Transverse colon (tissue), 4 donors: ENCODE measurements at regions of chr1 and their contacts with region 1.

Region 1: GRCh38 chr1:246513619-246514343 is 6.7 kb upstream of the SMYD3 start:
- DNase-seq: no peak
- H3K4me3 ChIP-seq: no peak overlapping the region
- H3K27ac ChIP-seq: no peak overlapping the region
- H3K4me1 ChIP-seq: no peaks in the 10 kb centered on the region
- H3K27me3 ChIP-seq: no peaks in the 10 kb centered on the region
- CTCF ChIP-seq: no peak
- EP300 ChIP-seq: no peak
- POLR2A ChIP-seq: no peak

Region 2: DNA sequence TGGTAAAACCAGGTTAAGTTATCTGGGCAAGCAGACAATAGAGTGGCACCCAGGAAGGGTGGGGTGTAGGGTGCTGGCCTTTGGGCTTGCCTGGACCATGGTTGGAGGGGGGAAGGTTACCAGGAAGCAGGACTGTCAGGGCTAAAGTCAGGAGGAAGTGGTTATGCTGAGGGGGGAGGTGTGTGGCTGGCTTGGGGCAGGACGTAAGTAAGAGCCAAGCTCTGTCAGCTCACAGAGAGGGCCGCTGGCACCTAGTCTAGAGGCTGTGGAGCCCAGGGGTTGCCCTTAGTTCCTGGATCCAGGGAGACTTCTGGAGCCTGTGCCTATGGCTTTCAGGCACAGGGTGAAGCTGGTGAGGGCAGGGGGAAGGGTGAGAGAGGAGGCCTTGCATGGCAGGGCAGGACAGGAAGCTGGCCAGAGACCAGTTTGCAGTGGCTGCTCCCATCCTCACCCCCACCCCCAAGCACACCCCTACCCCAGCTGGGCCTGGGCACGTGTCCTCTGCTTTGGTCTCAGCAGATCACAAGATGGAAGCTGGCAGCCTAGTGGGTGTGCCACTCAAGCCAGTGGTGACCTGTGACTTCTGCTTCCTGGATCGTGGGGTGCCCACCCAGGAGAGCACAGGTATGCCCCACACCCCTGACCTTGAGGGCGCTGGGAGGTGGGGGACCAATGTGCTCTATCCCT is 13.8 kb after region 1 on chr1:
- in situ Hi-C with region 1: no loop called
- intact Hi-C with region 1: loop called (anchors 2 kb)
- DNase-seq: no peak
- H3K4me3 ChIP-seq: no peak overlapping the region
- H3K27ac ChIP-seq: no peak overlapping the region
- H3K4me1 ChIP-seq: no peaks in the 10 kb centered on the region
- H3K27me3 ChIP-seq: no peaks in the 10 kb centered on the region
- CTCF ChIP-seq: no peak
- EP300 ChIP-seq: no peak
- POLR2A ChIP-seq: no peak